ENCODE measurements at regions of chr1 and their contacts with region 1.

Region 1: GRCh38 chr1:214637722-214638458 is 34.9 kb downstream of the CENPF start:
- DNase-seq: peak; percentile 39 to 67 (median 59)
- H3K4me3 ChIP-seq: no peak overlapping the region
- H3K27ac ChIP-seq: no peak overlapping the region
- H3K4me1 ChIP-seq: no peaks in the 10 kb centered on the region
- H3K27me3 ChIP-seq: no peaks in the 10 kb centered on the region

Region 2: GRCh38 chr1:214514032-214514818 is 123.7 kb before region 1 on chr1:
- CTCF ChIA-PET with region 1: no interaction called
- POLR2A ChIA-PET with region 1: no interaction called
- DNase-seq: no peak
- H3K4me3 ChIP-seq: no peak overlapping the region
- H3K27ac ChIP-seq: no peak overlapping the region
- H3K4me1 ChIP-seq: peaks cover 0 to 8% (median 2%) of the 10 kb centered on the region in 4 experiments
- H3K27me3 ChIP-seq: peaks cover 0 to 19% (median 0%) of the 10 kb centered on the region in 5 experiments

Region 3: DNA sequence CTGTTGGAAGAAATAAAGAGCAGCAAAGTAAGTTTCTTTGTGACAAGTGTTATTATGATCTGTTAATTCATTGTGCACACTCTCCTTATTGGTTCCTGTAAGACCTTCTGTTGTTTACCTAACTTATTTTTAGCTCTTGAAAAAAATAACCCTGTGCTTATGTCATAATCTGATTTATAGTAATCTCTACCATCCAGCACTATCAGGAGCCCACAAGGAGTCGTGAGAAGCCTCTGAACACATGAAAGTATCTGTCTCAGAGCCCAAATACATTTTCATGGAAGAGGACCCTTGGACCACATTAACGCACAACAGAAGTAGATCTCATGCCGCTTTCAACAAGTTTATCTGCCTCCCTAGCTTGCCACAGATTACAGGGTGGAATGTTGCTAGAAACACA is 10.9 kb after region 1 on chr1:
- CTCF ChIA-PET with region 1: interaction called, 23 read pairs
- POLR2A ChIA-PET with region 1: no interaction called
- DNase-seq: no peak
- H3K4me3 ChIP-seq: no peak overlapping the region
- H3K27ac ChIP-seq: no peak overlapping the region
- H3K4me1 ChIP-seq: no peaks in the 10 kb centered on the region
- H3K27me3 ChIP-seq: no peaks in the 10 kb centered on the region

Region 4: DNA sequence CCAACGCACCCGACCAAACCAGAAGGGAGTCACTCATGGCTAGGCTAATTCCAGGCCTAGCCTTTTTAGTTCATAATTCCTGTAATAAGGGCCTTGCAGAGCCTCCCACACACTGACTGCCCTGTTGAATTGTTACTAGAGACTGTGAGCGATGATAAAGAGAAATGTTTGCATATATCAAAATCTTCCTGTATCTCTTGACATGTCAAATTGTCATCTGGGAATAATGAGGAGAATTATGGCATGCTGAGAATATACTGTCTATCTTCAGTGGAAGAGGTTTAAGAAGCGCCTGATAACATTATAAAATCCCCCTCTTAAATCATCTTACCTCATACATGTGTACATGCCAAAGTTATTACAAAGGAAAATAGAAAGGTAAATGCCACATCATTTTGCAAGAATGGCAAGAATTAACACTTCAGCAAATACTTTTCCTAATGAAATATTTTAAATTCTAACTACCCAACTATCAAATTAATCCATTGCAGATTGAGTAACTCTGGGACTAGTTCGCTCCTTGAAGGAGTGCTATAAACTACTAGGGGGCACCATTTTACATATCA is 109.2 kb after region 1 on chr1:
- CTCF ChIA-PET with region 1: no interaction called
- POLR2A ChIA-PET with region 1: no interaction called
- DNase-seq: no peak
- H3K4me3 ChIP-seq: no peak overlapping the region
- H3K27ac ChIP-seq: no peak overlapping the region
- H3K4me1 ChIP-seq: no peaks in the 10 kb centered on the region
- H3K27me3 ChIP-seq: no peaks in the 10 kb centered on the region

Measured in common myeloid progenitor, CD34-positive (primary cell).